Esophagus squamous epithelium (tissue), 5 donors: ENCODE measurements at regions of chr16 and their contacts with region 1.

Region 1: GRCh38 chr16:84967828-84968227 is 43.5 kb downstream of the ZDHHC7 start:
- DNase-seq: no peak
- H3K4me3 ChIP-seq: no peak overlapping the region
- H3K27ac ChIP-seq: no peak overlapping the region
- H3K4me1 ChIP-seq: peaks cover 4 to 16% (median 7%) of the 10 kb centered on the region in 3 donors
- H3K27me3 ChIP-seq: peaks cover 0 to 40% (median 0%) of the 10 kb centered on the region in 4 donors
- CTCF ChIP-seq: no peak
- POLR2A ChIP-seq: no peak

Region 2: GRCh38 chr16:84759061-84759460 is 208.8 kb before region 1 on chr16:
- intact Hi-C with region 1: loop called (anchors 5 kb)
- DNase-seq: no peak
- H3K4me3 ChIP-seq: no peak overlapping the region
- H3K27ac ChIP-seq: peak overlapping the region in 2 of 4 donors; percentile 10 to 19
- H3K4me1 ChIP-seq: peaks cover 15 to 31% (median 17%) of the 10 kb centered on the region in 3 donors
- H3K27me3 ChIP-seq: no peaks in the 10 kb centered on the region
- CTCF ChIP-seq: no peak
- POLR2A ChIP-seq: no peak

Region 3: DNA sequence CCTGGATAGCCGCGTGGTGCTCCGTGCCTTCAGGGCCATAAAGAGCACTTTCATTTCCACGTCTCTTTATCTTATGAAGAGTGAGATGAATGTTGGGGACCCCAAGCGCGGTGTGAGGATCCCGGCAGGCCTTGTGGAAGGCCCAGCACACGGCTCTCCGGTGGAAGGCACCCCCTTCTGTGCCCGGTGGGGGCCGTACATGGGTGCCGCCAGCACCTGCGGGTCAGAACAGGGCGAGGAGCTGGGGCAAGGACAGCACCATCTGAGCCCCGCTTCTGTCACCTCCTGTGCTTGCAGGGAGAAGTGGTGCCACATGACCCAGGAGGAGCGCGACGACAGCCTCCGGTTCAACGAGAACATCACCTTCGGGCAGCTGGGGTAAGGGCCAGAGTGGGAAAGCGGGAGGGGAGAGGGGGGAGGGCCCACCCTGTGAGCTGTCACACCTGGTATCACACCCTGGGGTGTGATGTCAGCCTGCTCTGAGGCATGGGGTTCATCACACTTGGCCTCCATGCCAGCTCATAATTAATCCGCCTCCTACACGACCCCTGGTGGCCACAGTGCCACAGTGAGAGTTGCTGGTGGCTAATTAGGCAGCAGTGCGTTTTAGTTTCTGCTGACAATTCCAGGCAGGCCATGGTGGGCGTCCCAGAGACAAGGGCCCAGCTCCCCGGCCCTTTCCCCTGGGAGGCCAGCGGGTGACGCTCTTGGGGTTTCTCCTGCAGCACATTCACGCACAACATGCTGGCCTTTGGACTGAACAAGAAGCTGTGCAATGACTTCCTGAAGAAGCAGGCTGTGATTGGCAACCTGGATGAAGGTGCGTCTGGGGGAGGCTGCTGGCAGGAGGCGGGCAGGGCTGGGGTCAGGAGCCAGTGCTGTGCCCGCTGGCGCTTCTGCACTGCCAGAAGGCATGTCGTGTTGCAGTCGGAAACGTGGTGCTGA is 118.8 kb after region 1 on chr16:
- intact Hi-C with region 1: loop called (anchors 10 kb)
- DNase-seq: no peak
- H3K4me3 ChIP-seq: no peak overlapping the region
- H3K27ac ChIP-seq: peak overlapping the region in 1 of 4 donors; percentile 1
- H3K4me1 ChIP-seq: peaks cover 7 to 50% (median 21%) of the 10 kb centered on the region in 3 donors
- H3K27me3 ChIP-seq: no peaks in the 10 kb centered on the region
- CTCF ChIP-seq: peak; percentile 72 to 94 (median 80)
- POLR2A ChIP-seq: no peak

Region 4: DNA sequence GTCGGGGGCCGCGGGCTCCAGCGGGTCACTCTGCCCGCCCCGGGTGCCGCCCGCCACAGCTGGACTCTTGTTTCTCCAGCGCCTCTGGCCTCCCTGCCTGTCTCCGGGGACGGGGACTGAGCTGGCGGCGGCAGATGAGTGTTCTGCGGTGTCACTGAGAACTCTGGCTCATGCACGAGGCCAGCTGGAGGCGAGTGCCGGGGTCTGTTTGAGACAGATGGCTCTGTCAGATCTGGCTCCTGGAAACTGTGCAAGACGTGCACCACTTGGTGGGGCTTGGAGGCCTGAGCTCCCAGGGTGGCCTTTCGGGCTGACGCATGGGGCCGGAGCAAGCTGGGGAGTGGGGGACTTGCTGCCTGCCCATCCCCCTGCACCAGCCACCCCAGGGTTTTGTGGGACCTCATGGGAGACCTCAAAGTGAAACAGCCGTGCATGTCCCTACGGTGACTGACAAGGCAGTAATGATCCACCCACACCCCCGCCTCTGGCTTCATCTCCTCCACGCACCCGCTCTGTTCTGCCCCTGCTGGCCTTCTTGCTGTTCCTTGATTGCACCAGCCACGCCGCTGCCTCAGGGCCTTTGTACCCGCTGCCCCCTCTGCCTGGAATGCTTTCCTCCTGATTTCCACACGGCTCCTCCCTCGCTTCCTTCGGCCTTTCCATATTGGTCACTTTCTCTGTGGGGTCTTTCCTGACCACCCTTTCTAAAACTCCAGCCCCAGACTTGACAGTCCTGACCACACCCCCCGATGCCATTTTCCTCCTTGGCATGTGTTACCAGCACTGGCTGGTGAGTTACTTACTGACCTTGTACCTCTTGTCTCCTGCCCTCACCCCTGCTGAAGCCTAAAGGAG is 319.4 kb after region 1 on chr16:
- intact Hi-C with region 1: no loop called
- DNase-seq: no peak
- H3K4me3 ChIP-seq: peak overlapping the region in 1 of 4 donors; percentile 23
- H3K27ac ChIP-seq: peak overlapping the region in 2 of 4 donors; percentile 21 to 43
- H3K4me1 ChIP-seq: peaks cover 0 to 50% (median 8%) of the 10 kb centered on the region in 3 donors
- H3K27me3 ChIP-seq: peaks cover 0 to 55% (median 0%) of the 10 kb centered on the region in 4 donors
- CTCF ChIP-seq: no peak
- POLR2A ChIP-seq: no peak